IMR-90 (cell line): ENCODE measurements at regions of chr1 and their contacts with region 1.

Region 1: DNA sequence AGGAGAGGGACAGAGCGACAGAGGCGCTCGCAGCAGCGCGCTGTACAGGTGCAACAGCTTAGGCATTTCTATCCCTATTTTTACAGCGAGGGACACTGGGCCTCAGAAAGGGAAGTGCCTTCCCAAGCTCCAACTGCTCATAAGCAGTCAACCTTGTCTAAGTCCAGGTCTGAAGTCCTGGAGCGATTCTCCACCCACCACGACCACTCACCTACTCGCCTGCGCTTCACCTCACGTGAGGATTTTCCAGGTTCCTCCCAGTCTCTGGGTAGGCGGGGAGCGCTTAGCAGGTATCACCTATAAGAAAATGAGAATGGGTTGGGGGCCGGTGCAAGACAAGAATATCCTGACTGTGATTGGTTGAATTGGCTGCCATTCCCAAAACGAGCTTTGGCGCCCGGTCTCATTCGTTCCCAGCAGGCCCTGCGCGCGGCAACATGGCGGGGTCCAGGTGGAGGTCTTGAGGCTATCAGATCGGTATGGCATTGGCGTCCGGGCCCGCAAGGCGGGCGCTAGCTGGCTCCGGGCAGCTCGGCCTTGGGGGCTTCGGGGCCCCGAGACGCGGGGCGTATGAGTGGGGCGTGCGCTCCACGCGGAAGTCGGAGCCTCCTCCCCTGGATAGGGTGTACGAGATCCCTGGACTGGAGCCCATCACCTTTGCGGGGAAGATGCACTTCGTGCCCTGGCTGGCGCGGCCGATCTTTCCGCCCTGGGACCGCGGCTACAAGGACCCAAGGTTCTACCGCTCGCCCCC is at the starts of genes CYB5RL and MRPL37:
- DNase-seq: peak; percentile 97
- ATAC-seq: peak; percentile 99
- H3K4me3 ChIP-seq: peak within 1 kb of the TSS; percentile 73
- H3K27ac ChIP-seq: peak within 1 kb of the TSS; percentile 41
- H3K4me1 ChIP-seq: peaks cover 4% of the 10 kb centered on the region
- H3K27me3 ChIP-seq: no peaks in the 10 kb centered on the region
- CTCF ChIP-seq: no peak
- POLR2A ChIP-seq: peak; percentile 84
- RAD21 ChIP-seq: 0 out of 2 replicates have a peak, but pooled peaks have one; percentile 1
- total RNA-seq, gene CYB5RL: 3.3 and 3.8 TPM in 2 replicates
- total RNA-seq, gene MRPL37: 111 and 132 TPM in 2 replicates

Region 2: GRCh38 chr1:54070171-54070837 is 129.6 kb before region 1 on chr1:
- CTCF ChIA-PET with region 1: interaction called, 3 read pairs
- POLR2A ChIA-PET with region 1: no interaction called
- dilution Hi-C with region 1: no loop called
- in situ Hi-C with region 1: no loop called
- intact Hi-C with region 1: loop called (anchors 2 kb)
- DNase-seq: peak; percentile 67
- ATAC-seq: peak; percentile 97
- H3K4me3 ChIP-seq: no peak overlapping the region
- H3K27ac ChIP-seq: no peak overlapping the region
- H3K4me1 ChIP-seq: peaks cover 3% of the 10 kb centered on the region; the same call in 1 of the 2 replicates
- H3K27me3 ChIP-seq: no peaks in the 10 kb centered on the region
- CTCF ChIP-seq: peak; percentile 99
- POLR2A ChIP-seq: no peak
- RAD21 ChIP-seq: peak; percentile 88

Region 3: GRCh38 chr1:54121482-54122134 is 78.3 kb before region 1 on chr1:
- CTCF ChIA-PET with region 1: no interaction called
- POLR2A ChIA-PET with region 1: no interaction called
- dilution Hi-C with region 1: no loop called
- in situ Hi-C with region 1: no loop called
- intact Hi-C with region 1: loop called (anchors 1 kb)
- DNase-seq: peak; percentile 82
- ATAC-seq: peak; percentile 90
- H3K4me3 ChIP-seq: peak overlapping the region; percentile 13; the same call in 1 of the 2 replicates
- H3K27ac ChIP-seq: no peak overlapping the region; the same call in 1 of the 2 replicates
- H3K4me1 ChIP-seq: peaks cover 9% of the 10 kb centered on the region
- H3K27me3 ChIP-seq: no peaks in the 10 kb centered on the region; the same call in 1 of the 2 replicates
- CTCF ChIP-seq: peak; percentile 90
- POLR2A ChIP-seq: peak; percentile 44; the same call in 1 of the 2 replicates
- RAD21 ChIP-seq: peak; percentile 89